ENCODE measurements at regions of chr6 and their contacts with region 1.

Region 1: GRCh38 chr6:53986165-53986720 is 125.0 kb upstream of the MLIP start:
- DNase-seq: peak; percentile 36 to 82 (median 64)
- H3K4me3 ChIP-seq: no peak overlapping the region
- H3K27ac ChIP-seq: no peak overlapping the region
- H3K4me1 ChIP-seq: no peaks in the 10 kb centered on the region
- H3K27me3 ChIP-seq: no peaks in the 10 kb centered on the region
- CTCF ChIP-seq: peak; percentile 64 to 86 (median 82)
- POLR2A ChIP-seq: no peak

Region 2: DNA sequence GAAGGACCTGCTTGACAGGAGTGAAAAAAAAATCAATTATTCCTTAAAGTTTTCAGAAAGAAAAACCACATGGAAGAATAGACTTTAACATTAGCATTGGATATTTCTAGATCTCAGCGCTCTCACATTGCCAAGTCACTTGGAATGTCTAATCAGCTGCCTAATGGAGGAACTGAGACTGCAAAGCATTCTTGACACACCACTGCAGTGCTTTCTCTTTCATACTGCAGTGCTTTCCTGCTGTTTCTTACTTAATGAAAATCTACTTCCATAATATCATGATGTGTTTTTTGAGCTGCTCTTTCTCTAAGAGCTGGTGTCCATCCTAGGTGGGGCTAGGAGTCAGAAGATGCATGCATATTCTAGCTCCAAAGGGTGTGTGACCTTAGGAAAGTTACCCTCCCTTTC is 1681.3 kb before region 1 on chr6:
- intact Hi-C with region 1: no loop called
- DNase-seq: no peak
- H3K4me3 ChIP-seq: peak overlapping the region in 1 of 4 donors; percentile 23
- H3K27ac ChIP-seq: peak overlapping the region in 4 of 5 donors; percentile 43 to 79 (median 58)
- H3K4me1 ChIP-seq: peaks cover 0 to 3% of the 10 kb centered on the region in 2 donors
- H3K27me3 ChIP-seq: no peaks in the 10 kb centered on the region
- CTCF ChIP-seq: no peak
- POLR2A ChIP-seq: no peak

Region 3: DNA sequence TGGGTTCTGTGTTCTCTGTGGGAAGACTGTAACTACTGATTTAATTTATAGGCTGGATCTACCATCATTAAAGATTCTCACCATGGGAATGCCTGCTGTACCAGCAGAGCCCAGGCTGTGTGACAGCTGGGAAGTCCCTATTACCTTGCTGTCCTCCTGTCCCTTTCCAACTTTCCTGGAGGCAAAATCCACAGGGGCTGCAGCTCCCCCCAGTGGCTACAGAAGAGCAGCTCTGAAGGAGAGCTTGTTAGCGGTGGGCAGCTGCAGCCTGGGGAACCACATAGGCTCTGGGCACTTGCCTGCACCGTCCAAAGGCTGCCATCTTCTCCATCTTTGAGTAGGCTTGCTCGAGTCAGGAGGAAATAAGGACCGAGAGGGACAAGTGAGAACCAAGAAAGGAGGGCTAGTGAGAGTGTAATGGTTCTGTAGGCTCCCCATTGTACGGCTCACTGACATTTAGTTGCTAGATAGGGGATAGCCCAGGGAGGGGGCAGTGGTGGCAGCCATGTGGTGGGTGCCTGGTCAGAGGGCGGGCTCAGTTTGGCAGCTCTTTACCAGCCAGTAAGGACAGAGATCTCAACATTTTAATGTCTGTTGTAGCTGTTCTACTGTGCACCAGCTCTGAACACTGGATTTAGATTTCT is 30.1 kb before region 1 on chr6:
- intact Hi-C with region 1: no loop called
- DNase-seq: peak; percentile 44 to 81 (median 63)
- H3K4me3 ChIP-seq: no peak overlapping the region
- H3K27ac ChIP-seq: no peak overlapping the region
- H3K4me1 ChIP-seq: no peaks in the 10 kb centered on the region
- H3K27me3 ChIP-seq: no peaks in the 10 kb centered on the region
- CTCF ChIP-seq: peak; percentile 32 to 77 (median 55)
- POLR2A ChIP-seq: no peak

Region 4: GRCh38 chr6:54267798-54268197 is 281.6 kb after region 1 on chr6:
- intact Hi-C with region 1: loop called in 1 of 2 experiments (anchors 10 kb)
- DNase-seq: peak; percentile 24 to 73 (median 30)
- H3K4me3 ChIP-seq: no peak overlapping the region
- H3K27ac ChIP-seq: no peak overlapping the region
- H3K4me1 ChIP-seq: no peaks in the 10 kb centered on the region
- H3K27me3 ChIP-seq: no peaks in the 10 kb centered on the region
- CTCF ChIP-seq: peak; percentile 27 to 65 (median 52)
- POLR2A ChIP-seq: no peak

Region 5: DNA sequence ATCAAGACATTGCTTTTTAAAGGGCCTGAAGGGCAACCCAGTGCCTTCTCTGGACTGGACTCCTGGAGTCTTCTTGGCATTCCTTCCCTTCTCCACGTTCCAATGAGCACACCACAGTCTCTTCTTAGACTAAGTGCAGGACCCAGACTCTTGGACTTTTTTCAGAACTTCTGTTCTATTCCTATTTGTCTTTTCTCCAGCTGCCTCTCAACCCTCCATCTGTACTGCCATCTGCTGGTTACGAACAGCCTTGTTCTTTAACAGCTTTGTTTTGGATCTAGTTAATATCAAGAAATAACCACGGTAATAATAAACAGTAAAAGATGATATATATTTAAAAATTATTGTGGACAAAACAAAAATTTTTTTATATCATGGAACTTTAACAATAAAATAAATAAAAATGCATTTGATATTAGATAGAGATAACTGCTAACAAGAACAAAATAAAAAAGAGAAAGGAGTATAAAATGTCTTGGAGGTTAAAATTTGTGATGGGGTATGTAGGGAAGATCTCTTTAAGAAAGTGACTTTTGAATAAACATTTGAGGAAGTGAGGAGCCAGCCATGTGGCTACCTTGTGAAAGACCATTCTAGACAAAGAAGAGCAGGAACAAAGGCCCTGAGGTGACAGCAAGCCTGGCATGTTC is 1083.0 kb after region 1 on chr6:
- intact Hi-C with region 1: loop called in 1 of 2 experiments (anchors 10 kb)
- DNase-seq: peak in 6 of 7 donors; percentile 12 to 59 (median 26)
- H3K4me3 ChIP-seq: no peak overlapping the region
- H3K27ac ChIP-seq: no peak overlapping the region
- H3K4me1 ChIP-seq: no peaks in the 10 kb centered on the region
- H3K27me3 ChIP-seq: no peaks in the 10 kb centered on the region
- CTCF ChIP-seq: peak; percentile 20 to 63 (median 47)
- POLR2A ChIP-seq: no peak